ENCODE measurements at regions of chr2 and their contacts with region 1.

Region 1: DNA sequence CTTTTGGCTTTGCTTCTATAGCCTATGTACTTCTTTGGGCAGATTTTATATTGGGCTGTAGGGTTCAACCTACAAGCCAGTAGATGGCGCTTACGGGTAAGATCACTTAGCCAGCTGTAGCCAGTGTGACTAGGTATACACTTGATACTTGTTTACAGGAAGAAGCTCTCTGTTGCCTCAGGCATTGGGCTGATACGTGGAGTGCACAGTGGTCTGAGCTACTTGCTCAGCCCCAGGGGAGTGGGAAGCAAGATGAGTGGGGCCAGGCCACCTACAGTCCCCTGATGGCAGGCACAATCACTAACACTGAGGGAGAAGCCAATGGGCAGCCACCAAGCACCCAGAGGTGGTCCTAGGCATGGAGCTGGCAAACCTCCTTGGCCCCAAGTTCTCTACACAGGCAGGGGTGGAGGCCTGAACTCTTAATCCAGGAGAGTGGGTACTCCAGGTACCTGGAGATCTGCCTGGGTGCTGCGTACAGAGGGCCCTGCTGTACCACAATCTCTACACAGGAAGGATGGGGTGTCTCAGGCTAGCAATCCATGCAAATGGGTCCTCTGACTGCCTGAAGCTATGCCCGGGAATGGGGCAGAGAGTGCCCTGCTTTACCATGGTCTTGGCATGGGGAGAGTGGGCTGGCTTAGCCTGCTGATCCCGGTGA is 122.2 kb downstream of the NCOA1 start:
- DNase-seq: peak; percentile 51 to 67
- ATAC-seq: peak; percentile 95 to 97 (median 97)
- H3K4me3 ChIP-seq: no peak overlapping the region
- H3K4me3 Mint-ChIP-seq: peak overlapping the region; percentile 61
- H3K27ac ChIP-seq: peak overlapping the region; percentile 62
- H3K27ac Mint-ChIP-seq: peak overlapping the region; percentile 89 to 98
- H3K4me1 ChIP-seq: peaks cover 8% of the 10 kb centered on the region
- H3K4me1 Mint-ChIP-seq: peaks cover 45 to 55% of the 10 kb centered on the region in 2 donors
- H3K27me3 ChIP-seq: no peaks in the 10 kb centered on the region
- H3K27me3 Mint-ChIP-seq: no peaks in the 10 kb centered on the region
- CTCF ChIP-seq: peak; percentile 75

Region 2: GRCh38 chr2:24429197-24430074 is 183.8 kb before region 1 on chr2:
- intact Hi-C with region 1: no loop called
- DNase-seq: no peak
- ATAC-seq: no peak
- H3K4me3 ChIP-seq: no peak overlapping the region
- H3K4me3 Mint-ChIP-seq: no peak overlapping the region
- H3K27ac ChIP-seq: no peak overlapping the region
- H3K27ac Mint-ChIP-seq: no peak overlapping the region
- H3K4me1 ChIP-seq: no peaks in the 10 kb centered on the region
- H3K4me1 Mint-ChIP-seq: no peaks in the 10 kb centered on the region
- H3K27me3 ChIP-seq: no peaks in the 10 kb centered on the region
- H3K27me3 Mint-ChIP-seq: no peaks in the 10 kb centered on the region
- CTCF ChIP-seq: no peak

Region 3: GRCh38 chr2:24739354-24740025 is 126.2 kb after region 1 on chr2:
- intact Hi-C with region 1: loop called (anchors 5 kb)
- DNase-seq: peak in 1 of 2 donors; percentile 60
- ATAC-seq: peak; percentile 85 to 91 (median 89)
- H3K4me3 ChIP-seq: no peak overlapping the region
- H3K4me3 Mint-ChIP-seq: peak overlapping the region; percentile 69
- H3K27ac ChIP-seq: peak overlapping the region; percentile 86
- H3K27ac Mint-ChIP-seq: peak overlapping the region; percentile 88 to 98
- H3K4me1 ChIP-seq: peaks cover 7% of the 10 kb centered on the region
- H3K4me1 Mint-ChIP-seq: peaks cover 43 to 47% of the 10 kb centered on the region in 2 donors
- H3K27me3 ChIP-seq: no peaks in the 10 kb centered on the region
- H3K27me3 Mint-ChIP-seq: no peaks in the 10 kb centered on the region
- CTCF ChIP-seq: no peak

Measured in natural killer cell (primary cell).